A673 (cell line): ENCODE measurements at regions of chr11 and their contacts with region 1.

Region 1: GRCh38 chr11:32395127-32395526 is 40.2 kb downstream of the WT1 start:
- DNase-seq: no peak
- H3K4me3 ChIP-seq: no peak overlapping the region
- H3K27ac ChIP-seq: no peak overlapping the region
- H3K4me1 ChIP-seq: peaks cover 49% of the 10 kb centered on the region
- H3K27me3 ChIP-seq: no peaks in the 10 kb centered on the region
- CTCF ChIP-seq: peak; percentile 39

Region 2: DNA sequence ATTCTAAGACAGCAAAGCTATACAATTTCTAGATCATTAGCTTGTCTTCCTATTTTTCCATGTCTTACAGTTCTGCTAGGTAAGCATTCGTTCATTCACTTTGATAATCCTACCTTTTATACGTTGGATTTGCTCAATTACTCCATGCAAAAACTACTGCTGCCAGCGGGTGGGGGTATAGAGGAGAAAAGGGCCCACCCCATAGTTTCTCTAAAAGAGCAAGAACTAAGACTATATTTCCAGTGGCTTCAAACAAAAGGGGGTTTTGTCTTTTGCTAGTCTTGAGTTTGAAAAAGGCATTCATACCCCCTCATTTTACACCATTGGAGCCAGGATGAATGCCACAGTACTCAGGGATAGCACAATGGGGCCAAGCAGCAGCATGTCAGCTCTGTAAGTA is 115.5 kb before region 1 on chr11:
- CTCF ChIA-PET with region 1: no interaction called
- POLR2A ChIA-PET with region 1: no interaction called
- intact Hi-C with region 1: no loop called
- DNase-seq: peak; percentile 65
- H3K4me3 ChIP-seq: no peak overlapping the region
- H3K27ac ChIP-seq: no peak overlapping the region
- H3K4me1 ChIP-seq: no peaks in the 10 kb centered on the region
- H3K27me3 ChIP-seq: no peaks in the 10 kb centered on the region
- CTCF ChIP-seq: peak; percentile 70

Region 3: DNA sequence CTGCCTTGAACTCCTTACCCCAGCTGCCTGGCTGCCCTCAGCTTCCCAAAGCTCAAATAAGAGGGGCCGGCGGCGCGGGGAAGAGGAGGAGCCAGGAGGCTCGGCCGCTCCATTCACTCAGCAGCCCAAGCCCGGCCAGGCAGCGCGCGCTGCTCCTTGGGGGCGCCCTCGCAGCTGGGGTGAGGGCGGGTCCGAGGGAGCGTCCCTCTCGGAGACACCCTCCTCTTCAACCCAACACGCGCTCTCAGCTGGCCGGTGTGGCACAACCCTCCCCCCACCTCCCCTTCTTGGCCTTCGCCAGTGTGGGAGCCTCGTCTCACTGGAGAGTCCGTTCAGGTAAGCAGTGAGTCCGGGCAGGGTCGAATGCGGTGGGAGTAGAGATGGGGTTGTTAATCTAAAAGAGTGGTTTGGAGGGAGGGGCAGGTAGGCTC is 40.4 kb after region 1 on chr11 and contains the start of gene WT1:
- CTCF ChIA-PET with region 1: interaction called, 12 read pairs
- POLR2A ChIA-PET with region 1: no interaction called
- intact Hi-C with region 1: no loop called
- DNase-seq: peak; percentile 86
- H3K4me3 ChIP-seq: peak within 1 kb of the TSS; percentile 41
- H3K27ac ChIP-seq: no peak within 1 kb of the TSS
- H3K4me1 ChIP-seq: peaks cover 48% of the 10 kb centered on the region
- H3K27me3 ChIP-seq: peaks cover 98% of the 10 kb centered on the region
- CTCF ChIP-seq: no peak
- total RNA-seq, gene WT1: 8.6 and 10.4 TPM in 2 replicates